GM12878 (cell line): ENCODE measurements at regions of chr5 and their contacts with region 1.

Region 1: GRCh38 chr5:93567424-93567823 is 13.6 kb downstream of the NR2F1-AS1 start:
- DNase-seq: no peak
- ATAC-seq: no peak
- H3K4me3 ChIP-seq: no peak overlapping the region
- H3K27ac ChIP-seq: no peak overlapping the region
- H3K4me1 ChIP-seq: no peaks in the 10 kb centered on the region
- H3K27me3 ChIP-seq: peaks cover 9 to 17% of the 10 kb centered on the region in 2 experiments
- CTCF ChIP-seq: no peak
- EP300 ChIP-seq: no peak
- POLR2A ChIP-seq: no peak
- RAD21 ChIP-seq: no peak

Region 2: GRCh38 chr5:93557021-93557604 is 10.3 kb before region 1 on chr5:
- CTCF ChIA-PET with region 1: interaction called, 3 read pairs
- POLR2A ChIA-PET with region 1: no interaction called
- RAD21 ChIA-PET with region 1: interaction called, 3 read pairs
- SMC1A ChIA-PET with region 1: interaction called, 14 read pairs
- in situ Hi-C with region 1: no loop called
- intact Hi-C with region 1: no loop called
- DNase-seq: no peak
- ATAC-seq: no peak
- H3K4me3 ChIP-seq: no peak overlapping the region
- H3K27ac ChIP-seq: no peak overlapping the region
- H3K4me1 ChIP-seq: no peaks in the 10 kb centered on the region
- H3K27me3 ChIP-seq: no peaks in the 10 kb centered on the region
- CTCF ChIP-seq: no peak
- EP300 ChIP-seq: no peak
- POLR2A ChIP-seq: no peak
- RAD21 ChIP-seq: no peak